GM12878 (cell line): ENCODE measurements at regions of chr6 and their contacts with region 1.

Region 1: GRCh38 chr6:91475975-91476374 is 889.1 kb upstream of the MAP3K7 start:
- DNase-seq: no peak
- ATAC-seq: peak; percentile 68
- H3K4me3 ChIP-seq: no peak overlapping the region
- H3K27ac ChIP-seq: no peak overlapping the region
- H3K4me1 ChIP-seq: no peaks in the 10 kb centered on the region; the same call in 1 of the 2 replicates
- H3K27me3 ChIP-seq: no peaks in the 10 kb centered on the region
- CTCF ChIP-seq: no peak
- EP300 ChIP-seq: no peak
- POLR2A ChIP-seq: no peak
- RAD21 ChIP-seq: no peak

Region 2: GRCh38 chr6:91328241-91328640 is 147.7 kb before region 1 on chr6:
- CTCF ChIA-PET with region 1: interaction called, 25 read pairs
- POLR2A ChIA-PET with region 1: interaction called, 3 read pairs
- RAD21 ChIA-PET with region 1: interaction called, 26 read pairs
- SMC1A ChIA-PET with region 1: interaction called, 38 read pairs
- in situ Hi-C with region 1: no loop called
- intact Hi-C with region 1: no loop called
- DNase-seq: no peak
- ATAC-seq: no peak
- H3K4me3 ChIP-seq: no peak overlapping the region
- H3K27ac ChIP-seq: no peak overlapping the region
- H3K4me1 ChIP-seq: no peaks in the 10 kb centered on the region
- H3K27me3 ChIP-seq: no peaks in the 10 kb centered on the region
- CTCF ChIP-seq: no peak
- EP300 ChIP-seq: no peak
- POLR2A ChIP-seq: no peak
- RAD21 ChIP-seq: no peak

Region 3: GRCh38 chr6:91412532-91412931 is 63.4 kb before region 1 on chr6:
- CTCF ChIA-PET with region 1: interaction called, 4 read pairs
- POLR2A ChIA-PET with region 1: interaction called, 3 read pairs
- RAD21 ChIA-PET with region 1: no interaction called
- SMC1A ChIA-PET with region 1: interaction called, 10 read pairs
- in situ Hi-C with region 1: no loop called
- intact Hi-C with region 1: no loop called
- DNase-seq: no peak
- ATAC-seq: no peak
- H3K4me3 ChIP-seq: no peak overlapping the region
- H3K27ac ChIP-seq: no peak overlapping the region
- H3K4me1 ChIP-seq: no peaks in the 10 kb centered on the region
- H3K27me3 ChIP-seq: no peaks in the 10 kb centered on the region
- CTCF ChIP-seq: peak in 2 of 3 experiments; percentile 7 to 11; a peak in 2 of 6 replicates
- EP300 ChIP-seq: no peak
- POLR2A ChIP-seq: no peak
- RAD21 ChIP-seq: peak; percentile 64

Region 4: DNA sequence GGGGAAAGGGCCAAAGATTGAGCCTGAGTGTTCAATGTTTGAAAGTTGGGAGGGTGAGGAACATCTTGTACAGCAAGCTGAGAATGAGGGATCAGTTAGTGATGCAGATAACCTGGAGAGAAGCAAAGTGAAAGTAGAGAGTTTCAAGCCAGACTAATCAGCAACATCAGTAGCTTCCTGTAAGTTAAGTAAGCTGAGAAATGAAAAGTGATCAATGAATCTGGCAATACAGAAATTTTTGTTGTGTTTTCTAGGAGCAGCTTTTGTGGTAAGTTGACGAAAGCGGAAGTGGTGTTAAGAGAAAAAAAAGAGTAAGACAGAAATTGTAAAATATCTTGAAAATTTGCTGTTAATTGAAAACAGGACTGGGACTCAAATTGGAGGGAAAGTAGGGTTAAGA is 33.6 kb before region 1 on chr6:
- CTCF ChIA-PET with region 1: interaction called, 12 read pairs
- POLR2A ChIA-PET with region 1: interaction called, 10 read pairs
- RAD21 ChIA-PET with region 1: interaction called, 41 read pairs
- SMC1A ChIA-PET with region 1: interaction called, 131 read pairs
- in situ Hi-C with region 1: no loop called
- intact Hi-C with region 1: no loop called
- DNase-seq: no peak
- ATAC-seq: peak; percentile 20; the same call in 1 of the 3 replicates
- H3K4me3 ChIP-seq: no peak overlapping the region
- H3K27ac ChIP-seq: peak overlapping the region; percentile 48
- H3K4me1 ChIP-seq: no peaks in the 10 kb centered on the region
- H3K27me3 ChIP-seq: no peaks in the 10 kb centered on the region
- CTCF ChIP-seq: no peak
- EP300 ChIP-seq: no peak
- POLR2A ChIP-seq: no peak
- RAD21 ChIP-seq: no peak

Region 5: GRCh38 chr6:91447530-91448254 is 28.3 kb before region 1 on chr6:
- CTCF ChIA-PET with region 1: interaction called, 7 read pairs
- POLR2A ChIA-PET with region 1: interaction called, 6 read pairs
- RAD21 ChIA-PET with region 1: interaction called, 29 read pairs
- SMC1A ChIA-PET with region 1: interaction called, 131 read pairs
- in situ Hi-C with region 1: no loop called
- intact Hi-C with region 1: no loop called
- DNase-seq: no peak
- ATAC-seq: peak; percentile 76
- H3K4me3 ChIP-seq: no peak overlapping the region
- H3K27ac ChIP-seq: no peak overlapping the region
- H3K4me1 ChIP-seq: no peaks in the 10 kb centered on the region; the same call in 1 of the 2 replicates
- H3K27me3 ChIP-seq: no peaks in the 10 kb centered on the region
- CTCF ChIP-seq: no peak
- EP300 ChIP-seq: no peak
- POLR2A ChIP-seq: no peak
- RAD21 ChIP-seq: no peak

Region 6: DNA sequence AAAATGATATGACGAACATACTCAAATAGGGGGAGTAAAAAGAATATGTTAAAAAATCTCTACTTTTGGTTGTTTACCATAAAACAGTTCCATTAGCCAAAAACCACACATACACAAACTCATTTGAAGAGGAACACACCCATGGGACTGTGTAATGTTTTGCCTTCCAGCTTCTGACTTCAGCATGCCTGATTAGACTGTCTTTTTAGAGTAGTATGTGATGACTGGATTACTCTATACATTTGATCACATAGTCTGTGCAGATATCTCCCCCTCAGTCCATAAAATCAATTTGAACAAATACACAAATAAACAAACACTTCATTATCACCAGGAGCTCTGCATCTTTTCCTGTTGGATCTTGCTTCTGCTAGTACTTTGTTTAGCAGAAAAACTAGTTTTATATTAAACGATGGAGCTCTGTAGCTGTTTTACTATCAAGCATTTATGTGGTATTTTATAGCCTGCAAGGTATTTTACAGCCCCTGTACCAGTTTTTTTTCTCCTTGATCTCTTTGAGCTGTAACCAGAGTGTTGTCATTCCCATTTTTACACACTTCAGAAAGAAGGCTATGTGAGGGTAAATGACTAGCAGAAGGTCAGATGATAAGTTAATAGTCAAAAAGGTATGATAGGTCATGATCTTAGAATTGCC is 22.6 kb before region 1 on chr6:
- CTCF ChIA-PET with region 1: interaction called, 3 read pairs
- POLR2A ChIA-PET with region 1: interaction called, 6 read pairs
- RAD21 ChIA-PET with region 1: interaction called, 28 read pairs
- SMC1A ChIA-PET with region 1: interaction called, 131 read pairs
- in situ Hi-C with region 1: no loop called
- intact Hi-C with region 1: no loop called
- DNase-seq: no peak
- ATAC-seq: 0 out of 3 replicates have a peak, but pooled peaks have one; percentile 27
- H3K4me3 ChIP-seq: no peak overlapping the region
- H3K27ac ChIP-seq: no peak overlapping the region
- H3K4me1 ChIP-seq: no peaks in the 10 kb centered on the region
- H3K27me3 ChIP-seq: no peaks in the 10 kb centered on the region
- CTCF ChIP-seq: no peak
- EP300 ChIP-seq: no peak
- POLR2A ChIP-seq: no peak
- RAD21 ChIP-seq: no peak

Region 7: DNA sequence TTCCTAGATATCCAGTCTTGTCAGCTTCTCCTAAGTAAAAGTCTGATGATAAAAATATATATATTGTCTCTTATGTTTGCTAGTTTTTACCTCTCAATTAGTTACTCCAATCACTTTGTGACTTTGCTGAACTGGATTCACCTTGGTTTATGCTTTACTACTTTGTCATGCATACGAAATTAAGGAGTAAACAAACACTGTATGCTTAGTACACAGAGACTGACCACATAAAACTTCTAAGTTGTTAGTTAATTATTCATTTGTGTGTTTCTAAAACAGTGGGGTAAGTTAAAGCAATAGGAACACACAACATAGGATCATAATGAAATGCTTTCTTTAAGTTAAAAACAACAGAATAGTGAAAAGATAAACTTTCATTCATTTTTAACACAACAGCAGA is 11.8 kb before region 1 on chr6:
- CTCF ChIA-PET with region 1: interaction called, 3 read pairs
- POLR2A ChIA-PET with region 1: interaction called, 3 read pairs
- RAD21 ChIA-PET with region 1: interaction called, 3 read pairs
- SMC1A ChIA-PET with region 1: interaction called, 30 read pairs
- in situ Hi-C with region 1: no loop called
- intact Hi-C with region 1: no loop called
- DNase-seq: no peak
- ATAC-seq: peak; percentile 29; the same call in 2 of the 3 replicates
- H3K4me3 ChIP-seq: no peak overlapping the region
- H3K27ac ChIP-seq: no peak overlapping the region
- H3K4me1 ChIP-seq: no peaks in the 10 kb centered on the region
- H3K27me3 ChIP-seq: no peaks in the 10 kb centered on the region
- CTCF ChIP-seq: no peak
- EP300 ChIP-seq: no peak
- POLR2A ChIP-seq: no peak
- RAD21 ChIP-seq: no peak